Panc1 (cell line): ENCODE measurements at regions of chr4 and their contacts with region 1.

Region 1: GRCh38 chr4:1767770-1768366 is 25.2 kb upstream of the FGFR3 start:
- DNase-seq: no peak
- ATAC-seq: peak; percentile 67
- H3K4me3 ChIP-seq: peak overlapping the region in 1 of 2 experiments; percentile 15; a peak in 1 of 4 replicates
- H3K27ac ChIP-seq: no peak overlapping the region
- H3K4me1 ChIP-seq: peaks cover 9% of the 10 kb centered on the region; the same call in 1 of the 2 replicates
- H3K27me3 ChIP-seq: no peaks in the 10 kb centered on the region
- CTCF ChIP-seq: no peak; the same call in 1 of the 2 replicates

Region 2: DNA sequence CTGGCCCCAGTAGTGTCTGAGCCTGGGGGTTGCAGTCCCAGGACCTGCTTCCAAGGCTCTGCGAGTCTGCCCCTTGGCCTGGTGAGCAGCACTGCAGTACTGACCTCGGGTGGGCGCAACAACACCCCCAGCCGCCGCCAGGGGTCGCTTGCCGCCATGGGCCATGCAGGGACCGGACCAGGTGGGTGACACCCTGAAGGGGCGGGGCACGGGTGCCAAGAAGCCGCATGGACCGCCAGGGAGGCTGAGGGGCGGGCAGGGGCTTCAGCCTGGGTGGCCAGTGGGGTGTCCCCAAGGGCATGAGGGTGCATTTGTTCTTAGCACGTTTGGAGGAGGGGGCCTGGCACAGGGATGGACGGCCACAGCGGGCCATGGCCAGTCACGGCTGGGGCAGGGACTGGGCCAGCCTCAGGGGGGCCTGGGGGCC is 21.6 kb before region 1 on chr4:
- CTCF ChIA-PET with region 1: interaction called, 15 read pairs
- POLR2A ChIA-PET with region 1: no interaction called
- in situ Hi-C with region 1: no loop called
- intact Hi-C with region 1: no loop called
- DNase-seq: no peak
- ATAC-seq: peak; percentile 82
- H3K4me3 ChIP-seq: no peak overlapping the region
- H3K27ac ChIP-seq: peak overlapping the region; percentile 34; the same call in 1 of the 2 replicates
- H3K4me1 ChIP-seq: peaks cover 3% of the 10 kb centered on the region; the same call in 1 of the 2 replicates
- H3K27me3 ChIP-seq: no peaks in the 10 kb centered on the region
- CTCF ChIP-seq: no peak

Region 3: DNA sequence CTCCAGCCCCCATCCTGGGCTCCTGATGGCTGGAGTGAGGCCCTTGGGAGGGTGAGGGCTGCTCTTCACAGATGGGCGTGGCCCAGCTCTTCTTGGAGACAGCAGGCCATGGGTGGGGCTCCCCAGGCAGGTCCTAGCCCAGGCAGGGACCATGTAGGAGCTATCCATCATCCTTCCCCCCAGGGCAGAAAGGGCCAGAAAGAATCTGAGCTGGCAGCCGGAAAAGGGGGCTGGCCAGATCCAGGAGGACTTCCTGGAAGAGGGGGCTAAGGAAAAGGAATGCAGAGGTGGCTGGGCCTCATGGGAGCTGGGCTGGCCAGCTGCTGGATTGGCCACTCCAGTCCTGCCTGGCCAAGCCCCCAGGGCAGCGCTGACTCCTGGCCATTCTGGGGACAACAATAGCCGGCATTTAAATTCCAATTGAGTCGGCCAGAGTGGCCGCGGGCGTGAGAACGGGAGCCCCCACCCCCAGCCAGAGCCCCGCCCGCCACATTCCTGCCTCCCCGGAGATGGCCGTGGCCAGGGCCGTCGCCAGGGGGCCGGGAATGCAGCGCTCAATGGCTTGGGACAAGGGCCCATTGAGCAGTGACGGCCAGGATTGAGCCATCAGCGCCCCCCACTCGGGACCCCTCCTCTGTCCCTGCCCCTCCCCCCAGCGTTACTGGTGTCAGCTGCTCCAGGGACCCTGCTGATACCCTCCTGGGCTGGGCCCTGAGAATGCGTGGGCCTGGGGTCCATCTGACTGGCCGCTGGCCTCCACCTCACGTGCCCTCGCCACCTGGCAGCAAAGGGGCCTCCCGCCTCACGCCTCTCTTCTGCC is 10.2 kb after region 1 on chr4:
- CTCF ChIA-PET with region 1: interaction called, 11 read pairs
- POLR2A ChIA-PET with region 1: interaction called, 4 read pairs
- in situ Hi-C with region 1: no loop called
- intact Hi-C with region 1: no loop called
- DNase-seq: no peak
- ATAC-seq: no peak
- H3K4me3 ChIP-seq: no peak overlapping the region
- H3K27ac ChIP-seq: no peak overlapping the region
- H3K4me1 ChIP-seq: peaks cover 3% of the 10 kb centered on the region
- H3K27me3 ChIP-seq: no peaks in the 10 kb centered on the region
- CTCF ChIP-seq: no peak

Region 4: GRCh38 chr4:1819284-1819683 is 51.4 kb after region 1 on chr4:
- CTCF ChIA-PET with region 1: interaction called, 13 read pairs
- POLR2A ChIA-PET with region 1: no interaction called
- in situ Hi-C with region 1: no loop called
- intact Hi-C with region 1: no loop called
- DNase-seq: no peak
- ATAC-seq: no peak
- H3K4me3 ChIP-seq: no peak overlapping the region
- H3K27ac ChIP-seq: no peak overlapping the region
- H3K4me1 ChIP-seq: no peaks in the 10 kb centered on the region
- H3K27me3 ChIP-seq: no peaks in the 10 kb centered on the region
- CTCF ChIP-seq: no peak

Region 5: GRCh38 chr4:1883583-1883982 is 115.7 kb after region 1 on chr4:
- CTCF ChIA-PET with region 1: no interaction called
- POLR2A ChIA-PET with region 1: interaction called, 10 read pairs
- in situ Hi-C with region 1: no loop called
- intact Hi-C with region 1: no loop called
- DNase-seq: no peak
- ATAC-seq: no peak
- H3K4me3 ChIP-seq: no peak overlapping the region
- H3K27ac ChIP-seq: no peak overlapping the region
- H3K4me1 ChIP-seq: peaks cover 9% of the 10 kb centered on the region
- H3K27me3 ChIP-seq: no peaks in the 10 kb centered on the region
- CTCF ChIP-seq: no peak